K562 (cell line): ENCODE measurements at regions of chr20 and their contacts with region 1.

Region 1: DNA sequence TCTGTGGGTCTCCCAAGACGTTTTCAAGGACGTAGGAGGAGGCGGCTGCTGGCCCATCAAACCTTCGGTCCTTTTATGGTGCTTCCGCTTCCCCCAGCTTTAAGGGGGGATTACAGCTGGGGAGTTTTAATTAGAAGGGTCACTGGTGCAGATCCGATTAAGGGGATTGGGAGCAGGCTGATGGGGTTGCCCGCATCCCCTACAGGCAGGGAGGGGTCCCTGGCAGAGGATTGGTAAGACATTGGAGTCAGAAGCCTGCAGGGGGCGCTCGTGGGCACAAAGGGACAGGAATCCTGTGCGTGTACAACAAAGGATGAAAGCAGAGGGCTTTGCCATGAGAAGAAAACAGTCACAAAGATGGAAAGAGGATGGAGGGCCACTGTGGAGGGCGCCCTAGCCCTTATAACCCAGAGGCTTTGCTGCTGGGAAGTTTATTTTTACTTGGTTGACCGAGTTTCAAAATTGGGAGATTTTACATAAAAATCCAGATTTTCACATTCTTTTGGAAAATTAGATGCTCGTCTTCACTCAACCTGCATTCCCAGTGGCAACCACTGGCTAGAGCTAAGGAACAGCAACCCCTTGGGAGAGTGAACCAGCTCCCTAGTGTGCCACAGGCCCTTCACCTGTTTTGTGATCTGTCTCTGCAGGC is 97.9 kb downstream of the KCNB1 start:
- DNase-seq: peak; percentile 67 to 87 (median 80)
- ATAC-seq: peak; percentile 94
- H3K4me3 ChIP-seq: no peak overlapping the region
- H3K27ac ChIP-seq: no peak overlapping the region
- H3K4me1 ChIP-seq: no peaks in the 10 kb centered on the region
- H3K27me3 ChIP-seq: peaks cover 7 to 50% of the 10 kb centered on the region in 2 experiments; a peak in 3 of 5 replicates
- CTCF ChIP-seq: peak; percentile 77 to 91 (median 90)
- EP300 ChIP-seq: no peak
- POLR2A ChIP-seq: no peak
- RAD21 ChIP-seq: peak in 1 of 2 experiments; percentile 56; a peak in 3 of 4 replicates

Region 2: DNA sequence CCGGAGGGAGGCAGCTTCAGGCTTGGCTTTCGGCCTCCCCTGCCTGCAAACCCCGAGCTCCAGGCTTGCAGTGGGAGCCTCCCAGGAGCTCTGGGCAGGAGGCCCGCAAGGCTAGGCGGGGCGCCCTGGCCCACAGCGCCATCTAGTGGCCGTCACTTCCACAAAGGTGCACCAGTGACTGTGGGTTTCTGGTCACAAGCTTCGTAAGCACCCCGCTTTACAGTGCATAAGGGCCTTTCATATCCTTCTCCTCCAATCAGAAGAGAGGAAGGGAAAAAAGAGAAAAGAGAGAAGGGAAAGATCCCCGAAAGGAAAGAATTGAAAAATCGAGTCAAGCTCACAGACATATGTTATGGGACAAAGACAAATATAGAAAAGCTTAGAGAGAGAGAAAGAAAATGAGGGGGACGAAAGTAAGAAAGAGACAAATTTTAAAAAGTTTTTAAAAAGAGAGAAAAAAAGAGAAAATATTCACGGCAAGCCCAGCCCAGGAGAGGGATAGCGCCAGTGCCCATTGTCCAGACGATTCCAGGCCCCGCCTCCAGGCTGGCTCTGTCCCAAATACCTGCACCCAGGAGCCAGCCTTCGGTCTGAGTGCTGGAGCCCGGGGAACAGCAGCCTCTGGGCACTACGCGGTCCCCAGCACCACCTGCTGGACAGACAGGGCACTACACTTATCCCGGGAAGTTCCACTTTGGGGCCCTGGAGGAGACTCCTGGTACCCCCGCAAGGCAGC is 763.9 kb before region 1 on chr20:
- CTCF ChIA-PET with region 1: no interaction called
- POLR2A ChIA-PET with region 1: no interaction called
- in situ Hi-C with region 1: no loop called
- intact Hi-C with region 1: no loop called
- DNase-seq: peak; percentile 86 to 92 (median 88)
- ATAC-seq: peak; percentile 96
- H3K4me3 ChIP-seq: no peak overlapping the region
- H3K27ac ChIP-seq: no peak overlapping the region
- H3K4me1 ChIP-seq: peaks cover 9 to 21% of the 10 kb centered on the region in 2 experiments; a peak in 4 of 5 replicates
- H3K27me3 ChIP-seq: peaks cover 0 to 31% of the 10 kb centered on the region in 2 experiments; a peak in 3 of 5 replicates
- CTCF ChIP-seq: peak; percentile 85 to 94 (median 89)
- EP300 ChIP-seq: no peak
- POLR2A ChIP-seq: no peak
- RAD21 ChIP-seq: peak; percentile 71 to 89

Region 3: DNA sequence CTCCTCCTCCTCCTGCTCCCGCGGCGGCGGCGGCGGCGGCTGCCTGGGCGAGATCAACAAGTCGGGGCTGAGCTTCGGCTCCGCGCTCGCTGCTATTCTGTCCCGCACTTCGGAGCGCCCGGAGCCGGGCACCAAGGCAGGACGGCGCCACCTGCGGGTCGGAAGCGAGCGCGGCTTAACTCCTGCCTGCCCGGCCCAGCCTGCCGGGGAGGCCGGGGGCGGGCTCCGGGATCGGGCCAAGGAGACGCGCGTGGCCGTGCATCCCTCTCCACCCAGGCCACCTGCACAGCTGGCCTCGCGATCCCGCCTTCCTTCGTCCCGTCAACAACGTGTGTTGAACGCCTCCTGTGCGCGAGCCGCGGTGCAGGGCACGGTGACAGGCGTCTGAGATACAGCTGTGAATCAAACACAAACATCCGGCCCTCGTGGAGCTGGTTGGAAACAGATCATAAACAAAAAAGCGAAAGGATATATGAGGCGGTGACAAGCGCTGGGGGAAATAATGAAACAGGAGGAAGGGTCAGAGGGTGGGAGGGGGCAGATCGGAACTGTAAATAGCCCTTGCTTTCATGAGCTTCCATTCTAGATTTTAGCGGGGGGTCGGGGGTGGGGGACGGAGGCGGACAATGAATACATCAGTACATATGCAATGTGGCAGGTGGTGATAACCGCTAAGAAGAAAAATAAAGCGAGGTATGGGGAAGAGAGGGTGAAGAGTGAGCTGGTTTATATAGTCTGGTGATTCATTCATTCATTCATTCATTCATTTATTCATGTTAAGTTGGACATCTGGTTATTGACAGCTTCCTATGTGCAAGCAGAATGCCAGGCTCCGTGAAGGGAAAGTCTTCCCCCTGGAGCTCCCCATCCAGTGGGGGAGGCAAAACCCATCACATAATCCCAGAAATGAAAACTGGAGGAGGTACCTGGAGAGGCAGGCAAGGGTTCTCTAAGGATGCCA is 99.9 kb after region 1 on chr20:
- CTCF ChIA-PET with region 1: interaction called, 9 read pairs
- POLR2A ChIA-PET with region 1: no interaction called
- in situ Hi-C with region 1: no loop called
- intact Hi-C with region 1: loop called (anchors 2 kb)
- DNase-seq: peak; percentile 70 to 73 (median 71)
- ATAC-seq: peak; percentile 99
- H3K4me3 ChIP-seq: no peak overlapping the region; the same call in 1 of the 2 replicates
- H3K27ac ChIP-seq: no peak overlapping the region
- H3K4me1 ChIP-seq: peaks cover 0 to 16% of the 10 kb centered on the region in 2 experiments; a peak in 2 of 5 replicates
- H3K27me3 ChIP-seq: peaks cover 2 to 17% of the 10 kb centered on the region in 2 experiments; a peak in 1 of 5 replicates
- CTCF ChIP-seq: peak; percentile 67 to 91 (median 75)
- EP300 ChIP-seq: no peak
- POLR2A ChIP-seq: no peak
- RAD21 ChIP-seq: peak; percentile 64 to 81

Region 4: GRCh38 chr20:49575551-49576060 is 191.0 kb after region 1 on chr20:
- CTCF ChIA-PET with region 1: no interaction called
- POLR2A ChIA-PET with region 1: no interaction called
- in situ Hi-C with region 1: no loop called
- intact Hi-C with region 1: no loop called
- DNase-seq: no peak
- ATAC-seq: no peak
- H3K4me3 ChIP-seq: no peak overlapping the region
- H3K27ac ChIP-seq: no peak overlapping the region
- H3K4me1 ChIP-seq: no peaks in the 10 kb centered on the region
- H3K27me3 ChIP-seq: peaks cover 38 to 61% of the 10 kb centered on the region in 2 experiments
- CTCF ChIP-seq: no peak
- EP300 ChIP-seq: no peak
- POLR2A ChIP-seq: no peak
- RAD21 ChIP-seq: no peak